ENCODE measurements at regions of chr5 and their contacts with region 1.

Region 1: GRCh38 chr5:7391814-7392692 is 3.9 kb upstream of the ADCY2 start:
- DNase-seq: peak in 1 of 2 experiments; percentile 39
- H3K4me3 ChIP-seq: no peak overlapping the region
- H3K27ac ChIP-seq: no peak overlapping the region; the same call in 1 of the 2 replicates
- H3K4me1 ChIP-seq: peaks cover 9 to 19% (median 14%) of the 10 kb centered on the region in 4 experiments
- H3K27me3 ChIP-seq: peaks cover 0 to 4% (median 0%) of the 10 kb centered on the region in 4 experiments; a peak in 1 of 7 replicates
- CTCF ChIP-seq: peak in 2 of 3 experiments; percentile 77 to 79; a peak in 3 of 4 replicates
- EP300 ChIP-seq: no peak
- POLR2A ChIP-seq: no peak
- RAD21 ChIP-seq: peak; percentile 80 to 89

Region 2: GRCh38 chr5:7220156-7220555 is 171.9 kb before region 1 on chr5:
- CTCF ChIA-PET with region 1: no interaction called
- POLR2A ChIA-PET with region 1: no interaction called
- DNase-seq: no peak
- H3K4me3 ChIP-seq: no peak overlapping the region
- H3K27ac ChIP-seq: no peak overlapping the region
- H3K4me1 ChIP-seq: no peaks in the 10 kb centered on the region
- H3K27me3 ChIP-seq: no peaks in the 10 kb centered on the region
- CTCF ChIP-seq: no peak
- EP300 ChIP-seq: no peak
- POLR2A ChIP-seq: no peak
- RAD21 ChIP-seq: no peak

Region 3: GRCh38 chr5:7261049-7261448 is 131.0 kb before region 1 on chr5:
- CTCF ChIA-PET with region 1: interaction called, 19 read pairs
- POLR2A ChIA-PET with region 1: interaction called, 33 read pairs
- DNase-seq: peak in 1 of 2 experiments; percentile 93
- H3K4me3 ChIP-seq: peak overlapping the region in 1 of 4 experiments; percentile 13; a peak in 1 of 8 replicates
- H3K27ac ChIP-seq: no peak overlapping the region; the same call in 1 of the 2 replicates
- H3K4me1 ChIP-seq: peaks cover 0 to 4% (median 0%) of the 10 kb centered on the region in 4 experiments; a peak in 2 of 7 replicates
- H3K27me3 ChIP-seq: no peaks in the 10 kb centered on the region
- CTCF ChIP-seq: peak in 2 of 3 experiments; percentile 78 to 81; a peak in 3 of 4 replicates
- EP300 ChIP-seq: peak in 1 of 2 experiments; percentile 36; a peak in 1 of 3 replicates
- POLR2A ChIP-seq: peak in 1 of 2 experiments; percentile 66; a peak in 2 of 3 replicates
- RAD21 ChIP-seq: peak; percentile 97 to 99

Region 4: DNA sequence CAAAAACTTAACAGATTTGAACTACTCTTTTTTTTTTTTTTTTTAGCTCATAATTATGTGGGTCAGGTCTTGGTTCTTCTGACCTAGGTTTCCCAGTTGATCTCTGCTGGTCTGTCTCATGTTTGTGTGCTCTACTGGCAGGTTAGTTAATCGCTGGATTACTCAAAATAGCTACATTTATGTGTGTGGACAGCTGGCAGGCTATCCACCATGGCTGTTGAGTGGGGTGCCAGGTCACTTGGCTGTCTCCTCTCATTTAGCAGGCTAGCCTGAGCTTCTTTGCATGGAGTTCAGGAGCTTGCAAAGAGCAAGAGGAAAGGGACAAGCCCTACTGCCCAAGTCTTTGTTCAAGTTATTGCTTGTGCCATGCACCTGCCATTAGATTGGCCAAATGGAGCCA is 13.2 kb after region 1 on chr5:
- CTCF ChIA-PET with region 1: interaction called, 16 read pairs
- POLR2A ChIA-PET with region 1: interaction called, 28 read pairs
- DNase-seq: no peak
- H3K4me3 ChIP-seq: no peak overlapping the region
- H3K27ac ChIP-seq: no peak overlapping the region
- H3K4me1 ChIP-seq: peaks cover 7 to 17% (median 14%) of the 10 kb centered on the region in 4 experiments; a peak in 4 of 7 replicates
- H3K27me3 ChIP-seq: no peaks in the 10 kb centered on the region
- CTCF ChIP-seq: no peak
- EP300 ChIP-seq: no peak
- POLR2A ChIP-seq: no peak
- RAD21 ChIP-seq: no peak

Region 5: GRCh38 chr5:7471710-7472109 is 79.7 kb after region 1 on chr5:
- CTCF ChIA-PET with region 1: no interaction called
- POLR2A ChIA-PET with region 1: no interaction called
- DNase-seq: no peak
- H3K4me3 ChIP-seq: no peak overlapping the region
- H3K27ac ChIP-seq: no peak overlapping the region
- H3K4me1 ChIP-seq: peaks cover 3 to 23% (median 14%) of the 10 kb centered on the region in 4 experiments
- H3K27me3 ChIP-seq: no peaks in the 10 kb centered on the region
- CTCF ChIP-seq: no peak
- EP300 ChIP-seq: no peak
- POLR2A ChIP-seq: no peak
- RAD21 ChIP-seq: no peak

Measured in H1 (cell line).